Heart left ventricle (tissue), 16 donors: ENCODE measurements at regions of chr2 and their contacts with region 1.

Region 1: DNA sequence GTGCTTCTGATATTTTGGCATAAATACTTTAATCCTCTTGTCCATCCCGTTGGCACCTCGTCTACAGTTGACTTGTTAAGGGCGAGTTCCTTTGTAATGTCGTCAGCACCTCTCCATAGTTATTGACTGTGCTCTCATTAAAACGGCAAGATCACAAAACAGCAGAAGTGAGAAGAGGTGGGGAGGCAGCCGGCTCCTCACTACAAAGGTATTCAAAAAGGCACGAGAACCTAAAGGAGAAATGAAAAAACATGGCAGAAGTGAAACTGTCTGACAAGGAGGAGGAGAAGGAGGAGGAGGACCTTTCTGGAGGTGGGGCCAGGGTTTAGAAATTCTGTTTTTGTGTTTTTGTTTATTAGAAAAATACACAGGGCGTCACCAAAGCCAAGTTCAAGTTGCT is 235.6 kb downstream of the BCL11A start:
- DNase-seq: no peak
- ATAC-seq: peak; percentile 48 to 84 (median 76)
- H3K4me3 ChIP-seq: peak overlapping the region in 6 of 12 donors; percentile 1 to 30 (median 10)
- H3K27ac ChIP-seq: no peak overlapping the region
- H3K4me1 ChIP-seq: peaks cover 0 to 19% (median 0%) of the 10 kb centered on the region in 12 donors
- H3K27me3 ChIP-seq: peaks cover 0 to 5% (median 0%) of the 10 kb centered on the region in 9 donors
- CTCF ChIP-seq: no peak
- POLR2A ChIP-seq: no peak

Region 2: DNA sequence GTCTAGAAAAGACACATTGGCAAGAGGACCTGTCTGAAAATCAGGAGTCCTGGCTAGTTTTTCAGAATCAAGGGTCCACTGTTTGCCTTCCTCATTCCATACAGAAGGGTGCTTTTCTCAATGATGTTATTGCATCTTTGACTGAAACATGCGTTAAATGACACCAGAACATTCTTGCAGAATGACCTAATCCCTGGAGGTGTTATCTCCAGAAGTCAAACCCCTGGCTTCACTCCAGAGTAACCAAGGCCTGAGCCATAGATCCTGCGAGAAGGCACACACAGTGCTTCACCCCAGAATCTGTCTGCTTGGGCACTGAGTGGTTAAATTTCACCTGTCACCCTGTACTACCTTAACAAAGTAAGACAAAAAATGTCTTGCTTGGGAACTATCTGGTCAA is 1021.6 kb before region 1 on chr2:
- intact Hi-C with region 1: loop called in 2 of 10 experiments (anchors 5 to 10 kb)
- DNase-seq: no peak
- ATAC-seq: no peak
- H3K4me3 ChIP-seq: no peak overlapping the region
- H3K27ac ChIP-seq: no peak overlapping the region
- H3K4me1 ChIP-seq: peaks cover 0 to 7% (median 0%) of the 10 kb centered on the region in 12 donors
- H3K27me3 ChIP-seq: no peaks in the 10 kb centered on the region
- CTCF ChIP-seq: no peak
- POLR2A ChIP-seq: no peak

Region 3: GRCh38 chr2:60167089-60167488 is 150.8 kb before region 1 on chr2:
- intact Hi-C with region 1: loop called in 1 of 10 experiments (anchors 10 kb)
- DNase-seq: peak in 1 of 5 donors; percentile 55
- ATAC-seq: peak; percentile 66 to 88 (median 76)
- H3K4me3 ChIP-seq: no peak overlapping the region
- H3K27ac ChIP-seq: no peak overlapping the region
- H3K4me1 ChIP-seq: no peaks in the 10 kb centered on the region
- H3K27me3 ChIP-seq: no peaks in the 10 kb centered on the region
- CTCF ChIP-seq: no peak
- POLR2A ChIP-seq: no peak

Region 4: DNA sequence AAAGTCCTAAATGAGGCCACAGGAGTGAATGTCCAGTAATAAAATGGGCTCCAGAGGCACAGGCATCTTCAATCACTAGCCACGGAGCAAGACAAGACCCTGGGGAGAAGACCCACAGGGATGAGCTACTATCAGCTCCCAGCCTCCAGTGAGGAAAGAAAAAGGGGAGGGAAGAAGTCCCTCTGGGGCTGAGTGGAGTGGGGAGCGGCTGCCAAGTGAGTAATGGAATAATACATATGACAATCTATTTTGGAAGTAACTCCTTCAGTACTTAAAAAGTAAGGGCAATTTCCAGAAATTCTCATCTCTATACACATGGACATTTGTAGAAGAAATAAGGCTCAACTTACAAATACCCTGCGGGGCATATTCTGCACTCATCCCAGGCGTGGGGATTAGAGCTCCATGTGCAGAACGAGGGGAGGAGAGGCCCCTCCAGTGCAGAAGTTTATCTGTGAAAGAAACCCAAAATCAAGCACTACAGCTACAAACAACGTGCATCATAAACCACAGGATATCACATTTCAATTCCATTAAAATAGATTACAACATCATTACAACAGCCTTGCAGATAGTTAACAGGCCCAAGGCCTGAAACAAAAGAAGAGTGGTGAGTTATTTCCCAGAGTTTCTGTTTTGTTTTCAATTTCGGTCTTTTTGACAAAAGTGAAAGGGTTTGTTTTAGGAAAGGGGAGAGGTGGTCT is 150.7 kb after region 1 on chr2:
- intact Hi-C with region 1: no loop called
- DNase-seq: no peak
- ATAC-seq: peak in 3 of 4 donors; percentile 27 to 64 (median 48)
- H3K4me3 ChIP-seq: no peak overlapping the region
- H3K27ac ChIP-seq: peak overlapping the region in 3 of 12 donors; percentile 5 to 46 (median 26)
- H3K4me1 ChIP-seq: peaks cover 0 to 38% (median 10%) of the 10 kb centered on the region in 12 donors
- H3K27me3 ChIP-seq: no peaks in the 10 kb centered on the region
- CTCF ChIP-seq: no peak
- POLR2A ChIP-seq: no peak

Region 5: DNA sequence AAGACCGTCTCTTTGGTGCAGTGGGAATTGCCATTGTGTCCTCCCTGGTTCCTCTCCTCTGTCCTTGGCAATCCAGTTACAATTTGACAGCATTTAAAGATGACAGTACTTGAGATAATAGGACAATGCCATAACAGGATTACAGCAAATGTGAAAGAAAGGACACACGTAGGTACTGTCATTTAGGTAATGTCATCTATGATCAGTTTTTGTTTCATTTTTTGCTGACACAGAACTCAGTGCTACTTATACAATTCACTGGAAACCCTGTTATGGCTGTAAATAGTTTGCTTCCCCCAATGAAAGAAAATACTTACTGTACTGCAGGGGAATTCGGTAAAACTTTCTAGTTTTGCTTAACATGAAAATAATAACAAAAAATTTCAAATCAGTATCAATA is 170.4 kb after region 1 on chr2:
- intact Hi-C with region 1: no loop called
- DNase-seq: no peak
- ATAC-seq: no peak
- H3K4me3 ChIP-seq: no peak overlapping the region
- H3K27ac ChIP-seq: peak overlapping the region in 6 of 12 donors; percentile 19 to 79 (median 68)
- H3K4me1 ChIP-seq: peaks cover 0 to 43% (median 23%) of the 10 kb centered on the region in 12 donors
- H3K27me3 ChIP-seq: no peaks in the 10 kb centered on the region
- CTCF ChIP-seq: no peak
- POLR2A ChIP-seq: no peak